ENCODE measurements at regions of chr2 and their contacts with region 1.

Region 1: GRCh38 chr2:10133007-10133647 is 10.6 kb downstream of the RRM2 start:
- DNase-seq: no peak
- ATAC-seq: no peak
- H3K4me3 ChIP-seq: no peak overlapping the region
- H3K27ac ChIP-seq: no peak overlapping the region
- H3K4me1 ChIP-seq: no peaks in the 10 kb centered on the region
- H3K27me3 ChIP-seq: no peaks in the 10 kb centered on the region
- CTCF ChIP-seq: no peak

Region 2: DNA sequence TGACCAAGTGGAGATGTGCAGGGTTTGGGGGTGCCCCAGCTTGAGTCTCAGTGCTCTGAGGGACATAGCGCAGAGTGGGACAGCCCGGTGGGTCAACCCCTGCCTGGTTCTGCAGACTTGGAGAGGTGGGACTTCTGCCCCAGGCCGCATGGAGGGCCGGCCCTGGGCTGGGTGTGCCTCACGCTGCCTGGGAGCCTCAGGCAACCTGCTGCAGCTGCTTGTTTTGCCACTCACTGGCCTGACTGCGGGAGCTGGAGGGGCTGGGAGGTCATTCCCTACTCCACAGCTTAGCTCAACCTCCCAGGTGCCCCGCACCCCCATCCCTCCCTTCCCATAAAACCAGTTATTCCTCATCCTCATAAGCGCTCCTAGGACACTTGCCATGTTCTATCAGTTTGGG is 281.9 kb after region 1 on chr2:
- intact Hi-C with region 1: loop called (anchors 5 kb)
- DNase-seq: no peak
- ATAC-seq: no peak
- H3K4me3 ChIP-seq: no peak overlapping the region
- H3K27ac ChIP-seq: no peak overlapping the region
- H3K4me1 ChIP-seq: no peaks in the 10 kb centered on the region
- H3K27me3 ChIP-seq: no peaks in the 10 kb centered on the region
- CTCF ChIP-seq: no peak